ENCODE measurements at regions of chr9 and their contacts with region 1.

Region 1: GRCh38 chr9:75148561-75148960 is 60.2 kb downstream of the OSTF1 start:
- DNase-seq: peak in 1 of 9 donors; percentile 32
- ATAC-seq: no peak
- H3K4me3 ChIP-seq: peak overlapping the region; percentile 5
- H3K4me3 Mint-ChIP-seq: peak overlapping the region in 9 of 10 donors; percentile 20 to 88 (median 82)
- H3K27ac ChIP-seq: peak overlapping the region; percentile 47
- H3K27ac Mint-ChIP-seq: peak overlapping the region; percentile 81 to 97 (median 86)
- H3K4me1 ChIP-seq: peaks cover 66 to 69% of the 10 kb centered on the region in 2 donors
- H3K4me1 Mint-ChIP-seq: peaks cover 47 to 96% (median 86%) of the 10 kb centered on the region in 7 donors
- H3K27me3 ChIP-seq: no peaks in the 10 kb centered on the region
- H3K27me3 Mint-ChIP-seq: no peaks in the 10 kb centered on the region

Region 2: GRCh38 chr9:74496819-74497747 is 651.5 kb before region 1 on chr9 and contains the start of gene RORB:
- CTCF ChIA-PET with region 1: no interaction called
- POLR2A ChIA-PET with region 1: no interaction called
- intact Hi-C with region 1: loop called in 1 of 2 experiments (anchors 10 kb)
- DNase-seq: peak in 2 of 9 donors; percentile 34 to 50
- ATAC-seq: peak; percentile 52
- H3K4me3 ChIP-seq: peak within 1 kb of the TSS; percentile 53
- H3K4me3 Mint-ChIP-seq: peak within 1 kb of the TSS; percentile 80 to 95 (median 88)
- H3K27ac ChIP-seq: no peak within 1 kb of the TSS
- H3K27ac Mint-ChIP-seq: peak within 1 kb of the TSS in 4 of 9 donors; percentile 30 to 75 (median 52)
- H3K4me1 ChIP-seq: no peaks in the 10 kb centered on the region
- H3K4me1 Mint-ChIP-seq: peaks cover 11 to 39% (median 33%) of the 10 kb centered on the region in 7 donors
- H3K27me3 ChIP-seq: peaks cover 0 to 8% of the 10 kb centered on the region in 2 donors
- H3K27me3 Mint-ChIP-seq: peaks cover 65 to 81% (median 66%) of the 10 kb centered on the region in 5 donors
- total RNA-seq, gene RORB: 0.12 TPM in 1 of 5 experiments, not detected in the others

Region 3: DNA sequence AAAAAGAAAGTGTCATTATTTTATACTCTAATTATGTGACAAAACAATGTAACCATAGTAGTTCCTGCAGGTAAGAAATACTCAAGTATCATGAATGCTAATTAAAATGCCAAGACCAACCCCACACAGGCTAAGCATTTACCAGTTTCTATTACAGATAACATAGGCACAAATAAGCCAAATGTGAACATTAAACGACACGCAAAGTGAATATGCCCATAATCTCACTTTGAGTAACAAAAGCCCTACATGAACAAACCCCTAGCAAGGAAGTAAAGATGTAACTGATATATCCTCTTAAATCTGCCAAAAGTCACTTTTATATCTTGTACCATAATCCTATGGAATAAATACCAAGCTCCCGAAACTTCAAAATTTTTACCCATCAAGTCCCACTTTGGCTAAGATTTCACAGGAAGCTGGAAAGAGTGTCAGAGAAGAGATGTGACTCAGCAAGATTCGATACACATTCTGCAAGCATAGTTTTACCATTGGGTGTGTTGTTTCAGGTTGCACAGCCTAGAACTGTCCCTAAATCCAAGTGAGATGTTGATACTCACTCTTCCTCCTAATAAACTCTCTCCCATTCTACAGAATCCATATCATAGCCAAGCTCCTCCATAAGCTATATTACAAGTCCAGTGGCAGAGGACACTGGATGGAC is 289.7 kb before region 1 on chr9:
- CTCF ChIA-PET with region 1: no interaction called
- POLR2A ChIA-PET with region 1: no interaction called
- intact Hi-C with region 1: no loop called
- DNase-seq: no peak
- ATAC-seq: no peak
- H3K4me3 ChIP-seq: no peak overlapping the region
- H3K4me3 Mint-ChIP-seq: no peak overlapping the region
- H3K27ac ChIP-seq: no peak overlapping the region
- H3K27ac Mint-ChIP-seq: no peak overlapping the region
- H3K4me1 ChIP-seq: no peaks in the 10 kb centered on the region
- H3K4me1 Mint-ChIP-seq: peaks cover 0 to 9% (median 0%) of the 10 kb centered on the region in 7 donors
- H3K27me3 ChIP-seq: no peaks in the 10 kb centered on the region
- H3K27me3 Mint-ChIP-seq: peaks cover 0 to 6% (median 0%) of the 10 kb centered on the region in 5 donors

Region 4: DNA sequence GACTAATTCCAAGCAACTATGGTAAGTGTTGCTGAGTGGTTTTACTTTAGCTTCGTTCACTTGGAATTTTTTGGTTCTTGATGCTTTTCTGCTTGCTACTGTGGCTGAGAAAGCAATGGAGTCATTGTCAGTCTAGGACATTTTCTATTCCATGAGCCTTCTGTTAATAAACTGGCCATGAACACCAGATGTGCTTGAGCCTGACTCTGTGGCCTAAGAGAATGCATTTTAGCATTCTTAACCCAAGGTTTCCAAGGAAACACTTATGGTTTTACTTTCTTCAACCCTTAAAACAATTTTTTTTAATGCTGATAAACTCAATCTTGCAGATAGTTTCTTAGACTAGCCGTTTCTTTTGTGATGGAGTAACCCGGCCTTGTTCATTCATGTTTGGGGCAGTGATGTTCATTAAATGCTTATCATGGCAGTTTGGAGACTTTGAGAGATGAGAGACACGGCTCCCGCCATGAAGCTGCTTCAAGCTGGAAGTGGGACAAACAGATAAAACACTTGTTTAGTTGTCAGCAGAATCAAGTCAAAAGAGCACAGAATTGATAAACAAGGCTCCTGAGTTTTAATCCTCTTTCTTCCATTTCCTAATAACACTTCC is 17.8 kb before region 1 on chr9:
- CTCF ChIA-PET with region 1: interaction called, 4 read pairs
- POLR2A ChIA-PET with region 1: interaction called, 8 read pairs
- intact Hi-C with region 1: loop called in 1 of 2 experiments (anchors 2 kb)
- DNase-seq: no peak
- ATAC-seq: no peak
- H3K4me3 ChIP-seq: no peak overlapping the region
- H3K4me3 Mint-ChIP-seq: no peak overlapping the region
- H3K27ac ChIP-seq: no peak overlapping the region
- H3K27ac Mint-ChIP-seq: peak overlapping the region in 7 of 9 donors; percentile 9 to 74 (median 56)
- H3K4me1 ChIP-seq: peaks cover 0 to 6% of the 10 kb centered on the region in 2 donors
- H3K4me1 Mint-ChIP-seq: peaks cover 10 to 77% (median 50%) of the 10 kb centered on the region in 7 donors
- H3K27me3 ChIP-seq: no peaks in the 10 kb centered on the region
- H3K27me3 Mint-ChIP-seq: no peaks in the 10 kb centered on the region

Region 5: DNA sequence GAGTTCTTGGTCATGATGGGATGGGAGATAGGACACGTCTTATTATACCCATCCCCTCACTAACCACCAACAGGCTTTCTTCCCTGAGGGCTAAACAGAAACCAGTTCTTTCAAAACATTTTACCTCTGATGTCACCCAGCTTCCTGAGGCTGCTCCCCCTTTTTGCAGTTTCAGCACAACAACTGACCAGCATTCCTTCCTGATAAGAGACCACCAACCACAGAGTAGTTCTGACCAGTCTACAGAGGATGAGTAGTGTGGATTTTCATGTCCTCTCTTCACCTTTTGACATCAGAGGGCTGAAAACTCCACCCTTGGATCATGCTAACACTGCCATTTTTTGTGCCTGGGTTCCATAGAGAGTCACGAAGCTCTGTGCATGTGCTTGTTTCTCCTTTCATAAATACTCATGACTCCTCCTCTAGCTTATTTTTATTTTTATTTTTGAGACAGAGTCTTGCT is 22.4 kb after region 1 on chr9:
- CTCF ChIA-PET with region 1: no interaction called
- POLR2A ChIA-PET with region 1: interaction called, 3 read pairs
- intact Hi-C with region 1: loop called (anchors 2 kb)
- DNase-seq: no peak
- ATAC-seq: peak; percentile 20
- H3K4me3 ChIP-seq: no peak overlapping the region
- H3K4me3 Mint-ChIP-seq: no peak overlapping the region
- H3K27ac ChIP-seq: no peak overlapping the region
- H3K27ac Mint-ChIP-seq: peak overlapping the region in 2 of 9 donors; percentile 8 to 64
- H3K4me1 ChIP-seq: no peaks in the 10 kb centered on the region
- H3K4me1 Mint-ChIP-seq: peaks cover 7 to 58% (median 30%) of the 10 kb centered on the region in 7 donors
- H3K27me3 ChIP-seq: no peaks in the 10 kb centered on the region
- H3K27me3 Mint-ChIP-seq: no peaks in the 10 kb centered on the region

Region 6: GRCh38 chr9:75185585-75186170 is 37.1 kb after region 1 on chr9:
- CTCF ChIA-PET with region 1: interaction called, 3 read pairs
- POLR2A ChIA-PET with region 1: interaction called, 3 read pairs
- intact Hi-C with region 1: loop called (anchors 1 to 5 kb)
- DNase-seq: peak in 7 of 9 donors; percentile 10 to 38 (median 25)
- ATAC-seq: peak; percentile 74
- H3K4me3 ChIP-seq: no peak overlapping the region
- H3K4me3 Mint-ChIP-seq: peak overlapping the region in 3 of 10 donors; percentile 20 to 36 (median 25)
- H3K27ac ChIP-seq: no peak overlapping the region
- H3K27ac Mint-ChIP-seq: peak overlapping the region in 2 of 9 donors; percentile 30 to 81
- H3K4me1 ChIP-seq: peaks cover 12 to 13% of the 10 kb centered on the region in 2 donors
- H3K4me1 Mint-ChIP-seq: peaks cover 8 to 32% (median 28%) of the 10 kb centered on the region in 7 donors
- H3K27me3 ChIP-seq: no peaks in the 10 kb centered on the region
- H3K27me3 Mint-ChIP-seq: no peaks in the 10 kb centered on the region

Region 7: GRCh38 chr9:75242426-75242825 is 93.9 kb after region 1 on chr9:
- CTCF ChIA-PET with region 1: no interaction called
- POLR2A ChIA-PET with region 1: no interaction called
- intact Hi-C with region 1: no loop called
- DNase-seq: no peak
- ATAC-seq: no peak
- H3K4me3 ChIP-seq: no peak overlapping the region
- H3K4me3 Mint-ChIP-seq: no peak overlapping the region
- H3K27ac ChIP-seq: no peak overlapping the region
- H3K27ac Mint-ChIP-seq: no peak overlapping the region
- H3K4me1 ChIP-seq: no peaks in the 10 kb centered on the region
- H3K4me1 Mint-ChIP-seq: peaks cover 0 to 2% (median 0%) of the 10 kb centered on the region in 7 donors
- H3K27me3 ChIP-seq: no peaks in the 10 kb centered on the region
- H3K27me3 Mint-ChIP-seq: peaks cover 0 to 3% (median 0%) of the 10 kb centered on the region in 5 donors